ENCODE measurements at regions of chr3 and their contacts with region 1.

Region 1: GRCh38 chr3:27607370-27607769 is 114.8 kb downstream of the EOMES start:
- DNase-seq: no peak
- H3K4me3 ChIP-seq: no peak overlapping the region
- H3K27ac ChIP-seq: no peak overlapping the region
- H3K4me1 ChIP-seq: peaks cover 0 to 4% (median 0%) of the 10 kb centered on the region in 4 experiments; a peak in 1 of 7 replicates
- H3K27me3 ChIP-seq: no peaks in the 10 kb centered on the region
- CTCF ChIP-seq: no peak
- EP300 ChIP-seq: no peak
- POLR2A ChIP-seq: no peak
- RAD21 ChIP-seq: no peak

Region 2: DNA sequence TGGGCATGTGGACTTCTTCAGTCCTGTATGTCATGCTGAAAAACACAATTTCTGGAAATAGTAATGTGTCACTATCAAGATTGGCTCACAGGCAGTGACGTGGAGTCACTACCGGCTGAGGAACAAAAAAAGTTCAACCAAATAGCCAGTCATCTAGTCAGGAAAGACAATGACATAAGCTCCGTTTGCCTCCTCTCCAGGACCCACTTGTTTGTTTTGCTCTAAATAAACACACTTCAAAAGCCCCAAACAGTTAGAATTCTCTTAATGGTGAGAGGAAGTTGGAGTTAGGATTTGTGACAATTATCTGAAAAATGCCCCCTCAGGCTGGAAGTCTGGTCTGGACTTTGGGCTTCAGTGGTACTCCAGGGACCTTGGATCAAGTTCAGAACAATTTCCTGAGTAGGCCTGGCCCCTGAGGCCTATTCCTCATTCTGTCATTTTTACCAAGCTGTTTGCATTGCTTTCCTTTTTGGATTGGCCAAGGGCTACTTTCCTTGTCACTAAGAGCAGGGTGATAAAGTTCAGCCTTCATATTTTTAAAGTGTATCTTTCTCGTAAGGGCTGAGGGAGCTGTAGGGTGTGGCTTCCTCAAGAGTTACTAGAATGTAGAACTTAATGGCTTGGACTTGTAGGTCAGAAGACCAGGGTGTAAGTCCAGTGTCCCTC is 15.8 kb after region 1 on chr3:
- CTCF ChIA-PET with region 1: interaction called, 10 read pairs
- POLR2A ChIA-PET with region 1: interaction called, 3 read pairs
- DNase-seq: no peak
- H3K4me3 ChIP-seq: no peak overlapping the region
- H3K27ac ChIP-seq: no peak overlapping the region
- H3K4me1 ChIP-seq: peaks cover 0 to 3% (median 0%) of the 10 kb centered on the region in 4 experiments; a peak in 2 of 7 replicates
- H3K27me3 ChIP-seq: no peaks in the 10 kb centered on the region
- CTCF ChIP-seq: no peak
- EP300 ChIP-seq: no peak
- POLR2A ChIP-seq: no peak
- RAD21 ChIP-seq: no peak